ENCODE measurements at regions of chr6 and their contacts with region 1.

Region 1: DNA sequence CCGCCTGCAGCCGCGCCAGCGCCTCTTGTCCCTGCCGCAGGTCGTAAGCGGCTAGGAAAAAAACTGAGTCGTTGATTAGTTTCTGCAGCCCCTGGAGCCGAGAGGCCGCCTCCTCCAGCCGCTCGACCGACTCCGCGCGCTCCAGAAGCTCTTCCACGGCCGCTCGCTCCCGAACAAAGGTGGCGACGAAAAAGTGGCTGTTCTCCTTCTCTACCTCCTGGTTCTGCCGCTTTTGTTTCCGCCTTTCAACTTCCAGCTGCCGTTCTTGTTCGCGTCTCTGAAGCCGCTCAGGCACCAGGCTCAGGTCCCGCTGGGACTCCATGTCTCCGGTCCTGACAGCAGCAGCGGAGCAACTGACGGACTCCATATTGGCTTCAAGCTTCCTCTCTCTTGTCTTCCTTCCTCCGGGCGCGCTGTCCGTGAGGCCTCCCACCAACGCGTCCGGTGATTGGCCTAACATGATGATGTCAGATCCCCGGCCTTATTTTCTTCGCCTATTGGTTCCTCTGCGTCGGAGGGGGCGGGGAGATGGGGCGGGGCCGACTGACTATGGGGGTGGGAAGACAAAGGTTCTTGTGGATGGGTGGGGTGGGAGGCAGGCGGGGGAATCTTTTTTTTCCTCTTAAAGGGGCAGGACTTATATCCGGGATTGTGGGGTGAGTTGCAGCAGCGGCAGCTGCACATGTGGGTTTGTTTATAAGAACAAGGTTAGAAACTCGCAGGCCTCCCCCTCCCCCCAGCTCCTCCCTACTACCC is at the start of gene TBCC:
- DNase-seq: peak; percentile 72
- ATAC-seq: peak; percentile 75
- H3K4me3 Mint-ChIP-seq: peak within 1 kb of the TSS; percentile 100
- H3K27ac Mint-ChIP-seq: peak within 1 kb of the TSS; percentile 100
- H3K4me1 Mint-ChIP-seq: peaks cover 32% of the 10 kb centered on the region
- H3K27me3 Mint-ChIP-seq: no peaks in the 10 kb centered on the region
- CTCF ChIP-seq: no peak
- total RNA-seq, gene TBCC: 41.5 and 41.7 TPM in 2 replicates

Region 2: GRCh38 chr6:42493914-42494539 is 251.9 kb before region 1 on chr6:
- CTCF ChIA-PET with region 1: no interaction called
- POLR2A ChIA-PET with region 1: no interaction called
- intact Hi-C with region 1: no loop called
- DNase-seq: no peak
- ATAC-seq: no peak
- H3K4me3 Mint-ChIP-seq: no peak overlapping the region
- H3K27ac Mint-ChIP-seq: no peak overlapping the region
- H3K4me1 Mint-ChIP-seq: no peaks in the 10 kb centered on the region
- H3K27me3 Mint-ChIP-seq: peaks cover 1% of the 10 kb centered on the region
- CTCF ChIP-seq: no peak

Region 3: GRCh38 chr6:42572523-42572922 is 173.4 kb before region 1 on chr6:
- CTCF ChIA-PET with region 1: no interaction called
- POLR2A ChIA-PET with region 1: interaction called, 12 read pairs
- intact Hi-C with region 1: no loop called
- DNase-seq: peak; percentile 25
- ATAC-seq: peak; percentile 91
- H3K4me3 Mint-ChIP-seq: peak overlapping the region; percentile 63
- H3K27ac Mint-ChIP-seq: peak overlapping the region; percentile 91
- H3K4me1 Mint-ChIP-seq: peaks cover 47% of the 10 kb centered on the region
- H3K27me3 Mint-ChIP-seq: no peaks in the 10 kb centered on the region
- CTCF ChIP-seq: no peak

Region 4: GRCh38 chr6:42771741-42772100 is 25.8 kb after region 1 on chr6:
- CTCF ChIA-PET with region 1: interaction called, 4 read pairs
- POLR2A ChIA-PET with region 1: interaction called, 1,220 read pairs
- intact Hi-C with region 1: loop called (anchors 1 kb)
- DNase-seq: no peak
- ATAC-seq: no peak
- H3K4me3 Mint-ChIP-seq: peak overlapping the region; percentile 85
- H3K27ac Mint-ChIP-seq: peak overlapping the region; percentile 99
- H3K4me1 Mint-ChIP-seq: peaks cover 57% of the 10 kb centered on the region
- H3K27me3 Mint-ChIP-seq: no peaks in the 10 kb centered on the region
- CTCF ChIP-seq: no peak

Region 5: DNA sequence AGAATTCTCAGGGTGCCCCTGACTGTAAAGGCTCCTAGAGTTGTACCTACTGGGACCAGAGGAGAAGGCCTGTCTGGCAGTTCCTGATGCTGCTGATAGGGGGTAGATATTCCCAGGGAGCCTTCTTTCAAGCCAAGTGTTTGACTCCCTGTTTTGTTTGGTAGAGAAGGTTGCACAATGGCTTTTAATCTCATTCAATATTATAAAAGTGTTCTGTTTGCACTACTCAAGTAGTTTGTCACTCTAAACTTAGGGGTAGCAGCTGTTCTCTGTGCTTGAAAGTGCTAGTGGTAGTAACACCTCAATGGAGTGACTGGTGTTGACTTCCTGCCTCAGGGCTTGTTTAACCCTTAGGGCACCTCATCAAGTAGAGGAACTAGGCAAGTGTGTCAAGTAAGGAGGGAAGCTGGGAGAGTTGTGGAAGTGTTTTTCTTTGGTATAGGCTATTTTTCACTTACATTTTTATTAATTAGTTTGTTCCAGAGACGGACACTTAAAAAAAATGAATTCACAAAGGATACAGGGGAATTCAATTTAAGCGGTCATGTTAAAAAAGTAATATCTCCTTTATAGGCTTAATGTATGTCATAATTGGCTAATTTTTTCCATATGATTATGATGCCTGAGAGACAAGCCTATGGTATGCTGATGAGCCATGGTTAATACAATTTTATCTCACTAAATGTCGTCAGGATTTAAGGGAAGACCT is 74.1 kb after region 1 on chr6:
- CTCF ChIA-PET with region 1: interaction called, 4 read pairs
- POLR2A ChIA-PET with region 1: interaction called, 14 read pairs
- intact Hi-C with region 1: loop called (anchors 5 kb)
- DNase-seq: no peak
- ATAC-seq: peak; percentile 34
- H3K4me3 Mint-ChIP-seq: no peak overlapping the region
- H3K27ac Mint-ChIP-seq: peak overlapping the region; percentile 63
- H3K4me1 Mint-ChIP-seq: peaks cover 29% of the 10 kb centered on the region
- H3K27me3 Mint-ChIP-seq: no peaks in the 10 kb centered on the region
- CTCF ChIP-seq: no peak

Region 6: GRCh38 chr6:42879372-42880239 is 133.7 kb after region 1 on chr6 and contains the start of gene RPL7L1:
- CTCF ChIA-PET with region 1: no interaction called
- POLR2A ChIA-PET with region 1: interaction called, 87 read pairs
- intact Hi-C with region 1: loop called (anchors 1 kb)
- DNase-seq: peak; percentile 76
- ATAC-seq: peak; percentile 92
- H3K4me3 Mint-ChIP-seq: peak within 1 kb of the TSS; percentile 100
- H3K27ac Mint-ChIP-seq: peak within 1 kb of the TSS; percentile 99
- H3K4me1 Mint-ChIP-seq: peaks cover 28% of the 10 kb centered on the region
- H3K27me3 Mint-ChIP-seq: no peaks in the 10 kb centered on the region
- CTCF ChIP-seq: no peak
- total RNA-seq, gene RPL7L1: 94.5 and 110 TPM in 2 replicates

Region 7: GRCh38 chr6:42921801-42922200 is 175.9 kb after region 1 on chr6:
- CTCF ChIA-PET with region 1: no interaction called
- POLR2A ChIA-PET with region 1: no interaction called
- intact Hi-C with region 1: no loop called
- DNase-seq: no peak
- ATAC-seq: no peak
- H3K4me3 Mint-ChIP-seq: no peak overlapping the region
- H3K27ac Mint-ChIP-seq: no peak overlapping the region
- H3K4me1 Mint-ChIP-seq: peaks cover 18% of the 10 kb centered on the region
- H3K27me3 Mint-ChIP-seq: no peaks in the 10 kb centered on the region
- CTCF ChIP-seq: no peak

Region 8: GRCh38 chr6:43174263-43175112 is 428.6 kb after region 1 on chr6:
- CTCF ChIA-PET with region 1: no interaction called
- POLR2A ChIA-PET with region 1: interaction called, 4 read pairs
- intact Hi-C with region 1: loop called (anchors 1 kb)
- DNase-seq: peak; percentile 77
- ATAC-seq: peak; percentile 71
- H3K4me3 Mint-ChIP-seq: peak overlapping the region; percentile 73
- H3K27ac Mint-ChIP-seq: peak overlapping the region; percentile 90
- H3K4me1 Mint-ChIP-seq: peaks cover 48% of the 10 kb centered on the region
- H3K27me3 Mint-ChIP-seq: no peaks in the 10 kb centered on the region
- CTCF ChIP-seq: no peak

Measured in activated B cell treated with CpG ODN at 0.5 μM for 24 hours (primary cell).